B cell (primary cell): ENCODE measurements at regions of chr1 and their contacts with region 1.

Region 1: GRCh38 chr1:153990468-153991150 is at the start of gene RPS27:
- DNase-seq: peak; percentile 97
- ATAC-seq: peak; percentile 84
- H3K4me3 ChIP-seq: peak within 1 kb of the TSS; percentile 84 to 100 (median 94)
- H3K4me3 Mint-ChIP-seq: peak within 1 kb of the TSS; percentile 97
- H3K27ac ChIP-seq: peak within 1 kb of the TSS; percentile 93 to 96
- H3K27ac Mint-ChIP-seq: peak within 1 kb of the TSS; percentile 99
- H3K4me1 ChIP-seq: peaks cover 38 to 51% of the 10 kb centered on the region in 2 donors
- H3K4me1 Mint-ChIP-seq: peaks cover 41% of the 10 kb centered on the region
- H3K27me3 ChIP-seq: no peaks in the 10 kb centered on the region
- H3K27me3 Mint-ChIP-seq: no peaks in the 10 kb centered on the region
- CTCF ChIP-seq: no peak
- total RNA-seq, gene RPS27: 4,276 and 4,812 TPM in 2 replicates

Region 2: DNA sequence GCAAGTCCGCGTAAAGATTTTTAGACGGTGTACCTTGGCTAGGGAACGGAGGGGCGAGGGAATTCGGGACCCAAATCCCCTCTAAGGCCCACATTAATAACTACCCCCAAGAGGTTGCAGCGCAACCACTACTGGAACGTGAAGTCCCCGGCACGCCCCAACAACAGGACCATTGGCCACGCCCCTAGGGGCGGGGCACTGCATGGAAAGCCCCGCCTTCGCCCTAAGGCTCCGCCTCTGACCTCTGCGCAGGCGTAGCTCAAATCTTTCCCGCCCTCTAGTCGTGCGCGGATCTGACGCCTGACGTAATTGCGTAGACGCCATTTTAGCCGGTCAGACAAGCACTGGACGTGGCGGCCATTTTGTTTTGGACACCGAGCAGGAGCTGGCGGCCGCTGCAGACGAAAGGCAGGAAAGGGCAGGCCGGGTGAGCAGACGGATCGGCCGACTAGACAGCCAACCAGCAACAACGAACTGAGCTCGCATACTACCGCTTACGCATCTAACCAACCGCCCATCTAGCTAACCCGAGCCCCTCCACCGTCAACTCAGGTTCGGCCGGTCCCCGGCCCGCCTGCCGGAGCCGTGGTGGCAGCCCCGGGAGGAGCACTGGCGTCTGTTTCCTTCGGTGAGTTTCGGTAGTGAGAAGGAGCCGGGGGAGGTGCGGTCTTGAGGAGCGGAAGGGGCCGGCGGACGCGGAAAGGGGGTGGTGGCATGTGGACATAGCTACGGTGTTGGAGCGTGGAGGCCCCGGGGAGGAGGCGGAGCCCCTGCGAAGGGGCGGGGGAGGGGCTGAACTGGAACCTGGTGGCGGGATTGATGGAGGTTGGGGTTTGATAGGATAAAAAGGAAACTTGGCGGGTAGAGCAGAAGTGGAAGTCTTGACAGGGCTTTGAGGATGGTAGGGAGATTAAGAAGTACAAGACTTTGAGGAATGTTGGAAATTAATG is 356.6 kb before region 1 on chr1 and contains the start of gene CHTOP:
- CTCF ChIA-PET with region 1: interaction called, 4 read pairs
- POLR2A ChIA-PET with region 1: interaction called, 16 read pairs
- intact Hi-C with region 1: no loop called
- DNase-seq: peak; percentile 99
- ATAC-seq: peak; percentile 89
- H3K4me3 ChIP-seq: peak within 1 kb of the TSS; percentile 90 to 100 (median 99)
- H3K4me3 Mint-ChIP-seq: peak within 1 kb of the TSS; percentile 97
- H3K27ac ChIP-seq: peak within 1 kb of the TSS; percentile 97 to 99
- H3K27ac Mint-ChIP-seq: peak within 1 kb of the TSS; percentile 100
- H3K4me1 ChIP-seq: peaks cover 9 to 24% of the 10 kb centered on the region in 2 donors
- H3K4me1 Mint-ChIP-seq: peaks cover 39% of the 10 kb centered on the region
- H3K27me3 ChIP-seq: no peaks in the 10 kb centered on the region
- H3K27me3 Mint-ChIP-seq: no peaks in the 10 kb centered on the region
- CTCF ChIP-seq: no peak
- total RNA-seq, gene CHTOP: 156 TPM in 2 replicates

Region 3: DNA sequence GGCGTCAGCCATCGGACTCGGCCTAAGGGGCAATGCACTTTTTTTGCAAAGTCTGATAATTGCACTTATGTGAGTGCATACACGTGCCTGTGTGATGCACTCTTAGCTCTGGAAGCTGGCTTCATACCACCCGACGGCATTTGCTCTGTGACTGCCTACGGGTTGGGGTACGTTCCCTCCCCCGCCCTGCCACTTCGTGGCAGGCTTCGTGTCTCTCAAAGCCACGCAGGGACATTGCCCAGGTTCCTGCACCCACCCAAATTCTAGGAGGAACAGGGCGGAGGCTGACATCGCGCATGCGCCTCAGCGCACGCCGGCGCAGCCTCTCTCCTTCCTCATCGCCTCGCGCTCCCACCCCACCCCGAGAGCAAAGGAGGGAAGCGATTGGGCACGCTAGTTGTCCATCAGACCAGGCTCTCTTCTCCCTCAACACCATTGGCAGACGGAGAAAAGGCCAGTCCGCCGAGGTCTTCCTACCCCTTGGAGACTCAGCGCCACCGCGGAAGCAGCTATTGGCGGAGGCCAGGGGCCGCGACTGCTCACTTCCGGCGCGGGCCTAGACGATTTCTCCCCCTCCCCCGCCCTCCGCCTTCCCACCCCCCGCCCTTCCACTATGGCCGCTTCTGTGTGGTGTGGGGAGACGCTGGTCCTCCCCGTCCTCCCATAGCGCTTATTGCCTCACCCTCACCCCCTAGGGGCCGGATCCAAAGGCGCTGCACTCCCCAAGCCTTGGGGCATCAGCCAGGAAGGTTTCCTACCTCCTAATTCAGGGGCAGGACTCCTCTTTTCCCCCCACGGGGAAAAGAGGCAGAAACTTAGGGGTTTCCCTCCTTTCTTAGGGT is 262.9 kb before region 1 on chr1 and contains the start of gene INTS3:
- CTCF ChIA-PET with region 1: no interaction called
- POLR2A ChIA-PET with region 1: interaction called, 8 read pairs
- intact Hi-C with region 1: loop called (anchors 5 kb)
- DNase-seq: peak; percentile 99
- ATAC-seq: peak; percentile 99
- H3K4me3 ChIP-seq: peak within 1 kb of the TSS; percentile 78 to 99 (median 91)
- H3K4me3 Mint-ChIP-seq: peak within 1 kb of the TSS; percentile 84
- H3K27ac ChIP-seq: peak within 1 kb of the TSS; percentile 97 to 98
- H3K27ac Mint-ChIP-seq: peak within 1 kb of the TSS; percentile 86
- H3K4me1 ChIP-seq: peaks cover 9 to 16% of the 10 kb centered on the region in 2 donors
- H3K4me1 Mint-ChIP-seq: peaks cover 36% of the 10 kb centered on the region
- H3K27me3 ChIP-seq: no peaks in the 10 kb centered on the region
- H3K27me3 Mint-ChIP-seq: no peaks in the 10 kb centered on the region
- CTCF ChIP-seq: no peak
- total RNA-seq, gene INTS3: 69.1 and 69.3 TPM in 2 replicates

Region 4: GRCh38 chr1:153796791-153797659 is 193.6 kb before region 1 on chr1:
- CTCF ChIA-PET with region 1: interaction called, 103 read pairs
- POLR2A ChIA-PET with region 1: interaction called, 19 read pairs
- intact Hi-C with region 1: loop called (anchors 1 kb)
- DNase-seq: peak; percentile 88
- ATAC-seq: peak; percentile 92
- H3K4me3 ChIP-seq: no peak overlapping the region
- H3K4me3 Mint-ChIP-seq: no peak overlapping the region
- H3K27ac ChIP-seq: no peak overlapping the region
- H3K27ac Mint-ChIP-seq: peak overlapping the region; percentile 76
- H3K4me1 ChIP-seq: peaks cover 5 to 18% of the 10 kb centered on the region in 2 donors
- H3K4me1 Mint-ChIP-seq: peaks cover 12% of the 10 kb centered on the region
- H3K27me3 ChIP-seq: no peaks in the 10 kb centered on the region
- H3K27me3 Mint-ChIP-seq: no peaks in the 10 kb centered on the region
- CTCF ChIP-seq: peak; percentile 85

Region 5: DNA sequence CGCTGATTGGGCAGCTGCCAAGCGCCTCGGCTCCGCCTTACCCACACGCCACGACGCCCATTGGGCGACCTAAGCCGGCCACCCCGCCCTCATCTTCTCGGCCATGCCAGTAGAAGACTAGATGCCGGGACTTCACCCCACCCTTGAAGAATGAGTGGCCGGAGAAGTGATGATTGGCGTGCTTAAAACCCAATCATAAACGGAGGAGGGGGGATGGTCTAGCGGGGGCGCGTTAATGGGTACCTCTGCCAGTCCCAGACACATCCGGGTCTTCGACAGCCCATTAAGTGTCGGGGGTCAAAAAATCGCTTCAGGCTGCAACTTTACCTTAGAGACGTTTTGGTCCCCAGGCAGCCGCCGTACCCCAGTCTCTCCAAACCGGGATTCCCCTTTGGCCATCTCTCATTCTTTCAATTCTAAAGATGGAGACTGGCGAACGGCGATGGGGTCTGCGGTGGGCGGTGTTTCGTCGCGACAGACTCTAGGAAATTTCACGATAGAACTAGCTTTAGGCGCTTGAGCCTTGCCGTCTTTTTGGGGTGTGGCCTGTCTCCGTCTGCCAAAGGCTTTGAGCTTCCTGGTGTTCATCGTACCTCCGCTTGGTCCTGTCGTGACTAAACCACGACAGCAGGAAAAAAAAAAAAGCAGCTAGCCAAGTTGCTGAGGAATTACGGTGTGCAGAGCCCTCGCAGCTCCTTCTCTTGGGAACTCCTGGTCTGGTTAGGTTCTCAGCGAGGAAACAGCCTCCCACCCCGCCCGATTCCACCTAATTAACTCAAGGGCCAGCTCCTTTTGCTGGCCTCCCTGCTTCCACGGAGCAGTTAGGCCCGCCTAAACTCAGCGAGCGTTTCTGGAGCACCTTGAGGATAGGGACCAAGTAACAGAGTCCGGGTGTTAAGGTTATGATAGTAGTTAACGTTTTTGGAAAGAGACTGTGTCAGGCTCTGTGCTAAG is 67.4 kb before region 1 on chr1 and contains the start of gene GATAD2B:
- CTCF ChIA-PET with region 1: interaction called, 26 read pairs
- POLR2A ChIA-PET with region 1: interaction called, 9 read pairs
- intact Hi-C with region 1: loop called (anchors 2 kb)
- DNase-seq: peak; percentile 100
- ATAC-seq: peak; percentile 91
- H3K4me3 ChIP-seq: peak within 1 kb of the TSS; percentile 85 to 98 (median 97)
- H3K4me3 Mint-ChIP-seq: peak within 1 kb of the TSS; percentile 95
- H3K27ac ChIP-seq: peak within 1 kb of the TSS; percentile 84 to 99
- H3K27ac Mint-ChIP-seq: peak within 1 kb of the TSS; percentile 99
- H3K4me1 ChIP-seq: peaks cover 39 to 41% of the 10 kb centered on the region in 2 donors
- H3K4me1 Mint-ChIP-seq: peaks cover 43% of the 10 kb centered on the region
- H3K27me3 ChIP-seq: no peaks in the 10 kb centered on the region
- H3K27me3 Mint-ChIP-seq: no peaks in the 10 kb centered on the region
- CTCF ChIP-seq: no peak
- total RNA-seq, gene GATAD2B: 99.6 and 105 TPM in 2 replicates

Region 6: GRCh38 chr1:153936011-153936802 is 54.4 kb before region 1 on chr1:
- CTCF ChIA-PET with region 1: no interaction called
- POLR2A ChIA-PET with region 1: no interaction called
- intact Hi-C with region 1: no loop called
- DNase-seq: no peak
- ATAC-seq: no peak
- H3K4me3 ChIP-seq: no peak overlapping the region
- H3K4me3 Mint-ChIP-seq: no peak overlapping the region
- H3K27ac ChIP-seq: no peak overlapping the region
- H3K27ac Mint-ChIP-seq: peak overlapping the region; percentile 50
- H3K4me1 ChIP-seq: no peaks in the 10 kb centered on the region
- H3K4me1 Mint-ChIP-seq: peaks cover 6% of the 10 kb centered on the region
- H3K27me3 ChIP-seq: no peaks in the 10 kb centered on the region
- H3K27me3 Mint-ChIP-seq: no peaks in the 10 kb centered on the region
- CTCF ChIP-seq: no peak

Region 7: GRCh38 chr1:153977250-153978240 is 13.1 kb before region 1 on chr1 and contains the start of gene JTB:
- CTCF ChIA-PET with region 1: interaction called, 46 read pairs
- POLR2A ChIA-PET with region 1: interaction called, 20 read pairs
- intact Hi-C with region 1: loop called (anchors 1 kb)
- DNase-seq: peak; percentile 87
- ATAC-seq: peak; percentile 96
- H3K4me3 ChIP-seq: peak within 1 kb of the TSS; percentile 59 to 96 (median 90)
- H3K4me3 Mint-ChIP-seq: peak within 1 kb of the TSS; percentile 98
- H3K27ac ChIP-seq: peak within 1 kb of the TSS; percentile 55 to 87
- H3K27ac Mint-ChIP-seq: peak within 1 kb of the TSS; percentile 96
- H3K4me1 ChIP-seq: peaks cover 16 to 22% of the 10 kb centered on the region in 2 donors
- H3K4me1 Mint-ChIP-seq: peaks cover 34% of the 10 kb centered on the region
- H3K27me3 ChIP-seq: no peaks in the 10 kb centered on the region
- H3K27me3 Mint-ChIP-seq: no peaks in the 10 kb centered on the region
- CTCF ChIP-seq: no peak
- total RNA-seq, gene JTB: 99.1 and 106 TPM in 2 replicates

Region 8: DNA sequence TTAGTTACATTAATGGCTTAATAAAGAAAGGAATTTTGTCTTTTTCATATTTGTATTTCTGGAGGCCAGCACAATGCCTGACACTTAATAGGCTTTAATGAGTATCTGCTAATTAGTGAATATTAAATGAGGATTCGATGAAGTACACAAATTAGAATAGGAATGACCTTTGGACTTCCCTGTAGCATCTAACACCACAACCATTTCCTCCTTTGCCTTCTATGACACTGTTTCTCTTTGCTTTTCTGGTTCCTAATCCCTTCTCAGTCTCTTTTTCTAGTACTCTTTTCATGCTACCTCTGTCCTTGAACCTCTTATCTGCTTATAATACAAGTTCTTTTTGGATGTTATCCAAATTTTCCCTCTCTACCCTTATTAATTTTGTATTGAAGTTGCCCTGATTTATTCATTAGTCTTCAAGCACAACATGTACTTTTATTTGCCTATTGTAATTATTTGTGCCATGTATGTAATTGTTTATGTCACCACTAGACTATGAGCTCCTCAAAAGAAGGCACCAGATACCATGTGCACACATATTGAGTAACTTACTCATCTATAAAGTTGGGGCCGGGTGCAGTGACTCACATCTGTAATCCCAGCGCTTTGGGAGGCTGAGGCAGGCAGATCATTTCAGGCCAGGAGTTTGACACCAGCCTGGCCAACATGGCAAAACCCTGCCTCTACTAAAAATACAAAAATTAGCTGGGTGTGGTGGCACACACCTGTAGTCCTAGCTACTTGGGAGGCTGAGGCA is 23.7 kb after region 1 on chr1:
- CTCF ChIA-PET with region 1: no interaction called
- POLR2A ChIA-PET with region 1: no interaction called
- intact Hi-C with region 1: no loop called
- DNase-seq: no peak
- ATAC-seq: no peak
- H3K4me3 ChIP-seq: no peak overlapping the region
- H3K4me3 Mint-ChIP-seq: no peak overlapping the region
- H3K27ac ChIP-seq: no peak overlapping the region
- H3K27ac Mint-ChIP-seq: no peak overlapping the region
- H3K4me1 ChIP-seq: no peaks in the 10 kb centered on the region
- H3K4me1 Mint-ChIP-seq: no peaks in the 10 kb centered on the region
- H3K27me3 ChIP-seq: no peaks in the 10 kb centered on the region
- H3K27me3 Mint-ChIP-seq: no peaks in the 10 kb centered on the region
- CTCF ChIP-seq: no peak

Region 9: DNA sequence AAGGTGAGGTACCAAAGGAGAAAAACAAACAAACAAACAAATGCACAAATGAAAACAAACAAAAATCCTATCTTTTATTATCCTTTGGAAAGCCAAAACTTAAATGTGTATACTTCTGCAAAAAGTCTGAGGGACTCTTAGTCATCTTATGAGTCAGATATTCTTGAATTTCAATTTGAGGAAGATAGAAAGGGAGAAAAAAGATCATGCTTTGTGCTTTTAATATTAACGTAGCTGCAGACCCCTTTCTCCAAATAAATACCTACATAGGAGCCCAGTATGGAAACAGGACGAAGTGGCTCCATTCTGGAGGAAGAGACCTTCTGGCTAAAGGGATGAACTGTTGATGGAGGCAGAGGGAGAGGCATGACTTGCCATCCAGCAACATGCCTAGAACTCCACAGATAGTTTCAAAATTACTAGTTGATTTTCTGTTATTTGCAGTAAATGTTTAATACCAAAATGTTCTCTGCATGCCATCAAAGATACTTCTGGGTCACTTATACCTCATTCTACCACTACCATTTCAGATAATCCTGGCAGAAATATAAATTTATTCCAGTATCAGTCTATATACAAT is 138.9 kb after region 1 on chr1:
- CTCF ChIA-PET with region 1: no interaction called
- POLR2A ChIA-PET with region 1: no interaction called
- intact Hi-C with region 1: no loop called
- DNase-seq: no peak
- ATAC-seq: no peak
- H3K4me3 ChIP-seq: no peak overlapping the region
- H3K4me3 Mint-ChIP-seq: no peak overlapping the region
- H3K27ac ChIP-seq: no peak overlapping the region
- H3K27ac Mint-ChIP-seq: no peak overlapping the region
- H3K4me1 ChIP-seq: no peaks in the 10 kb centered on the region
- H3K4me1 Mint-ChIP-seq: no peaks in the 10 kb centered on the region
- H3K27me3 ChIP-seq: no peaks in the 10 kb centered on the region
- H3K27me3 Mint-ChIP-seq: no peaks in the 10 kb centered on the region
- CTCF ChIP-seq: no peak